ENCODE measurements at regions of chr7 and their contacts with region 1.

Region 1: DNA sequence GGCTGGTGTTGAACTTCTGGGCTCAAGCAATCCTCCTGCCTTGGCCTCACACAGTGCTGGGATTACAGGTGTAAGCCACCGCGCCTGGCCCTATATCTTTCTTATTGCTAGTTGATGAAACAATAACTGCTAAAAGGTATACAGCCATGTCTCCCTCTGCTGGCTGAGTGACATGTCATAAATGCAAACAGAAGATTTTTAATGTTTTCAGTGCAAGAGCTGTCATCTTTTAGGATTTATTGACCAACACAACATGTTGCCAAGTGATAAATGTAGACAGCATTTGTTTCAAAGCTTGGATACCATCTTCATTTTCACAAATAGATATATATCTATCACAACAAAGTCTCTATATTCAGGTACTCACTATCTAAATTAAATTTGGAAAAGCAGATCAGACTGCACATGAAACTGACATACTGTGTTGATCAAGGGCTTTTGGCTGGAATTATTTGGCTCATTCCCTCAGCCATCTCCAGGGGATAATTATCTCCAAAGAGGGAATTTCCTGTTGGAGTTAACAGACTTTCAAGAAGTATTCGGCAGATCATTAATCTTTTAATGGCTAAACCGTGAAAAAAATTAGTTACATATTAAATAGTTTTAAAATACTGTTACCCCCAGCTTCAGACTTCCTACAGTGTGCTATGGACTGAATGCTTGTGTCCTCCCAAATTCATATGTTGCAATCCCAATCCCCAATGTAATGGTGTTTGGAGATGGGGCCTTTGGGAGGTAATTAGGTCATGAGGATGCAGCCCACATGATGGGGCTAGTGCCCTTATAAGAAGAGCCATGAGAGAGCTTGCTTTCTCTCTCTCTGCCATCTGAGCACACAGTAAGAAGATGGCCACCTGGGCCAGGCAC is 41.3 kb upstream of the SRPK2 start:
- DNase-seq: no peak
- H3K4me3 ChIP-seq: no peak overlapping the region
- CTCF ChIP-seq: peak; percentile 33

Region 2: DNA sequence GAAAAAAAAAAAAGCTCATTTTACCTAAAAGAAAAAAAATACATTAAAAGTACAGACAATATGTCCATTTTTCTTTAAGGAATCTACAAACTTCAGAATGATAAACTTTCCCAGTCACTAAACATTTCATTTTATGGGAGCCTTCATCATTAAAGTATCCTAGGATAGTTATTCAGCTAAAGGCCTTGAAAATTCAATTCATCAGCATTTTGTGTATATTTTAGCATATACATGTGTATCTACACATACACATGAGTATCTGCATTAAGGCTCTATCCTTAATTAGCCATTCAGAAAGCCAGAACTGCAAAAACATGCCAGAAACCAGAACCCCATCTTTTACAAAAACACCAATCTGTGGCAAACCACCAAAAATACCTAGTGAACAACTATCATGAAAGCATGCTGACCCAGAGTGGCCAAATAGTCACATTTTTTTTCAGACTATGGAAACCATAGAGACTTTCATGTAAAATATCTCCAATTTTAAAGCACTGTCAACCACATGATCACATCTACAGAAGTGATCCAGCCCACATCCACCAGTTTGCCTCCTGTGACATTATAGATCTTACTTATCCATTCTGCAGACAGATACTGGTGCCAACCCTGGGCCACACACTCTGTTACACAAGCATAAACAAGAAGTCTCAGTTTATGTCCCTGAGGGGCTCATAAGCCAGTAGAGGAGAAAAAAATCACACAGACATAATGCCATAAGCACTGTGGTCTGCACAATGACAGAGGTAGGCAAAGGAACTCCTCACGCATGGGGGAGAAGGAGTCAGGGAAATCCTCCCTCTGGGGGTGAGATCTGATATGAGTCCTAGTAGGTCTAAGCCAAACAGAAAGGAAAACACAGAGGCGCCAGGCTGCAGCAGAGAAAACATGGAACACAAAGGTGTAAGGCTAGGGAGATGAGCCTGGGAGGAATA is 120.5 kb before region 1 on chr7:
- CTCF ChIA-PET with region 1: no interaction called
- POLR2A ChIA-PET with region 1: no interaction called
- DNase-seq: no peak
- H3K4me3 ChIP-seq: no peak overlapping the region
- CTCF ChIP-seq: no peak

Region 3: DNA sequence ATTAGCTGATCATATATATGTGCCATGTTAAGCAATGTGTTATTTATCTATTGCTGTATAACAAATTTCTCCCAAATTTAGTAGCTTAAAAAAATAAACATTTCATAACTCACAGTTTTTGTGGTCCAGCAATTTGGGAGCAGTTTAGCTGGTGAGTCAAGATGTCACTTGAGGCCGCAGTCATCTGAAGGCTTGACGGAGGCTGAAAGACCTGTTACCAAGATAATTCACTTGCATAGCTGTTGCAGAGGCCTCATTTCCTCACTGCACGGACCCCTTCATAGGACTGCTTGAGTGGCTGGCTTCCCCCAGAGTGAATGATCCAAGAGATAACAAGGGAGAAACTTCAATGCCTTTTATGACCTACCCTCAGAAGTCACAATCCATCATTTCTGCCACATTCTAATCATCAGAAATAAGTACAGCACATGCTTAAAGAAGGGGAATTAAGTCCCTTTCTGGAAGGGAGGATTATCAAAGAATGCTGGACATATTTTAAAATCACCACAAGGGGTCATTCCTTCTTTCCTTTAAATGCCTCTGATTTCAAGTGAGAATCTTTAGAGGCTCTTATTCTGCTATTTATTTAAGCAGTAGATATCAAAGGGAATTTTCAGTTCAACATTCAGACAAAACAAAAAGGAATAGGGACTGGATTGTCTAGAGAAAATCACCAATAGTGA is 30.8 kb before region 1 on chr7:
- CTCF ChIA-PET with region 1: interaction called, 10 read pairs
- POLR2A ChIA-PET with region 1: no interaction called
- DNase-seq: no peak
- H3K4me3 ChIP-seq: no peak overlapping the region
- CTCF ChIP-seq: no peak

Region 4: GRCh38 chr7:105413887-105414437 is 16.0 kb before region 1 on chr7:
- CTCF ChIA-PET with region 1: interaction called, 10 read pairs
- POLR2A ChIA-PET with region 1: no interaction called
- DNase-seq: no peak
- H3K4me3 ChIP-seq: no peak overlapping the region
- CTCF ChIP-seq: no peak

Measured in AG04449 (cell line).